AG04449 (cell line): ENCODE measurements at regions of chr1 and their contacts with region 1.

Region 1: DNA sequence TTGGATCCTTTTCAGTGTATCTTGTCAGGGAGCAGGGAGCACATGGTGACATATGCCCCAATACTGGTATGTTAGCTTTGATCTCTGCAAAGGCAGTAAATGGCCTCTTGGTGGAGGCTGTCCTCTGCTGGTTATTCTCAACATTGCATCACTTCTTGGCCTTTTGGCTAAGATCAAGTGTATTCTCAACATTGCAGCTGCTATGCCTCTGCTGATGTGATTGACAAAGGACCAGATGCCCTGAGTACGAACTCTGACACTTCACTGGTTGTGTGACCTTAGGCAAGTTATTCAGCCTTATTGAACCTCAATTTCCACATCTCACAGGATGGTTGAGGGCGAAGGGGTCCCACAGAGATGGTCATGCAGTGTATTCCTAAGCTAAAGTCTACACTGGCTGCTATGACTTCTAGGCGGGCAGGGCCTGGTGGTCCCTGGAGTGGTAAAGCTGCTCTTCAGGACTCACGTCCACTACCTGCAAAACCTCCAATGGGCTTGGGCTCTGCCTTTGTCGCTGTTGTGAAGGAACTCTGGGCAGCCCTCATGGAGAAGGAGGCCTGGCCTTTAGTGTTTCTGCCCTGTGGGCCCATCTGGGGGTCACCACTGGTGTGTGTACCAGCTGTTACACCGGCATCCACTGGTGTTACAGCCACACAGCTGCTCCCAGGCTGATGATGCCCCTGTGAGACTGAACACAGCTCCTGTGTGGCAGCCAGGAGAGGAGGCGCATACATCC is 64.8 kb downstream of the DNTTIP2 start:
- DNase-seq: no peak
- H3K4me3 ChIP-seq: no peak overlapping the region
- CTCF ChIP-seq: peak; percentile 93

Region 2: DNA sequence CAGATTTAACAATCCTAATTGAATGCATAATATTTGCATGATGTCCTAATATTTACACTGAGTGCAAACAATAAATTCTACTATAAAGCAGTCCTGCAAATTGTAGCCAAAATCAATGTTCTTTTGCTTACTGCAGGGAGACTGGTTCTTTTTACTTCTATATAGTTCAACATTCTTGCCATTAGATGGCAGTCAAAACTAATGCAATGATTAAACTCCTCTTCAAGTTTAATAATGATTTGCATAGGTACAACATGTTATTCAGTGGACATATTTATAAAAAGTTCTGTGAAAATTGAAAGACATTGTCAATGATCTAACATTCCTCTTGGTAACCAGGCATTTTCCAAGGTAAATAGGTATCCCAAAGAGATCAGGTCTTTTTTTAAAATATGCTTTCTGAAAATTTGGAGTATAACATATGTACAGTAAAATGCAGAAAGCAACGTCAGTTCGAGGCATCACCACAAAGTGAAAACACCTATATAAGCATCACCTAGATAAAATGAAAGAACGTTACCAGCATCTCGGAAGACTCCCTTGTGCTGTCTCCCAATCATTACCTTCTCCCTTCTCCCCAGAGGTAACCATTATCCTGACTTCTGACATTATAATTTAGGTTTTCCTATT is 376.1 kb before region 1 on chr1:
- CTCF ChIA-PET with region 1: interaction called, 11 read pairs
- POLR2A ChIA-PET with region 1: no interaction called
- DNase-seq: no peak
- H3K4me3 ChIP-seq: no peak overlapping the region
- CTCF ChIP-seq: peak; percentile 32

Region 3: DNA sequence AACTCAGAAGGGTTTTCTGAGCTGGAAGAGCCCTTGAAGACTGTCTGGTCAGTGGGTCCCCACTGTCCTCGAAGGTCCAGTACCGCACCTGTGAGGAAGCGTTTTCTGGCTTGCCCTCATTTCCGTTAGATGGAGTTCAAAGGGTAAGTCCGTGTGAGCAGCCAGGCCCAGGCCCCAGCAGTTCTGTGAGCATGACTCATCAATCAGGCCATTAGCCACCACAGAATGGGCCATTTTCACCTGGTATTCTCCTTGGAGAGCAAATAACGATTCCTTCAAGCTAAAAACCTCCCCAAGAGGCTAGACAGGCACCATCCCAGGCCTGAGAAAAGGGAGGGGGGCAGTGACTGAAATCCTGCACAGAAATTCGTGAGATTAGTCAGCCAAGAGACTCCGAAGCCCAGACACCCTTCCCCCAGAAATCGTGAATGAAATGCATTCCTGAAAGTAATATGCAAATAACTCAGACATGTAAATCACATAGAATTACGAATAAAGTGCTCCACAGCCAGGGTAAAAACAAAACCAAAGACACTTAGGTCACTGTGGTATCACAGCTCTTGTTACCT is 198.6 kb before region 1 on chr1:
- CTCF ChIA-PET with region 1: interaction called, 437 read pairs
- POLR2A ChIA-PET with region 1: no interaction called
- DNase-seq: no peak
- H3K4me3 ChIP-seq: no peak overlapping the region
- CTCF ChIP-seq: no peak

Region 4: DNA sequence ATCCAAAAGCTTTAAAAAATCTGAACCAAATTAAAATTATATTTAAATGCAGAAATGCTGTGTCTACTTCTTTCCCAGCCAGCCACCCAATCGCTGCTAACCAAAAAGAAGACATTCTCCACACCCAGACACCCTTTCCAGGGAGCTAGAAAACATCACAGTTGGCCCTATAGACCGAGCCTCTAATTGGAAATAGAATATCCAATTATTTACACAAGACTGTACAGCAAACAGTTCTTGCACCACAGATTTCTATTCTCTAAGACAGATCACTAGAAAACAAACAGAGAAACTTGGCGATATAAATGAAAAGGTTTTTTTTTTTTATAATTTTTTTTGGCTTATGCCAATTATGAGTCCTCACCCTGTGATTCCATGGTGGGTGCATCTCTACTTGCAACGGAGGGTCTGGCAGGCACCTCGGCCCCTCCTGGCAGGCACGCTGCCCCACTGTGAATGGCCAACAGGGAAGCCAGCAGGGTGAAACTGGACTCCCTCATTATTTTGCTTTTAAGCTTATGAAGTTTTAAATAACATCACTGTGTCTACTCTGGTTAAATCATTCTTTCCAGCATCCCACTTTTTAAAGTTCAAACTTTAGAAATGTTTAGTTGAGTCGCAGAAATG is 161.8 kb before region 1 on chr1:
- CTCF ChIA-PET with region 1: interaction called, 15 read pairs
- POLR2A ChIA-PET with region 1: interaction called, 3 read pairs
- DNase-seq: no peak
- H3K4me3 ChIP-seq: no peak overlapping the region
- CTCF ChIP-seq: no peak

Region 5: GRCh38 chr1:93686497-93687250 is 127.6 kb before region 1 on chr1:
- CTCF ChIA-PET with region 1: interaction called, 40 read pairs
- POLR2A ChIA-PET with region 1: interaction called, 15 read pairs
- DNase-seq: no peak
- H3K4me3 ChIP-seq: no peak overlapping the region
- CTCF ChIP-seq: no peak

Region 6: DNA sequence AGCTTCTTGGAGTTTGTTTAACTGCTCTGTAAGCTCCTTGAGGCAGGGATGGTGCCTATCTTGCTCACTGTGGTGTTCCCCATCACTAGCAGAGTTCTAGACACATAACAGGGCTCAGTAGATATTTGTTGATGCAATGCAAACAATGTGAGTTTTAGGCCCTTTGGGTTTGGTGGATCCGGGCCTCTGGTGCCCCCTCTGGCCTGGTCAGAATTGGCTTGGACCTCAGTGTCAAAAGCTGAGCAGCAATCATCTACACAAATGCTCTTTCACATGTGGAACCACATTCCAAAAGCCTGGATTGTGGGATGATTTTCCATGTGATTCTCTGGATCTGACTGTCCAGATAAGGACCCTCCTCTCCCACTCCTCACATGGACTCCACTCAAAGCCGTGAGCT is 79.2 kb before region 1 on chr1:
- CTCF ChIA-PET with region 1: interaction called, 126 read pairs
- POLR2A ChIA-PET with region 1: interaction called, 10 read pairs
- DNase-seq: no peak
- H3K4me3 ChIP-seq: no peak overlapping the region
- CTCF ChIP-seq: peak; percentile 30

Region 7: DNA sequence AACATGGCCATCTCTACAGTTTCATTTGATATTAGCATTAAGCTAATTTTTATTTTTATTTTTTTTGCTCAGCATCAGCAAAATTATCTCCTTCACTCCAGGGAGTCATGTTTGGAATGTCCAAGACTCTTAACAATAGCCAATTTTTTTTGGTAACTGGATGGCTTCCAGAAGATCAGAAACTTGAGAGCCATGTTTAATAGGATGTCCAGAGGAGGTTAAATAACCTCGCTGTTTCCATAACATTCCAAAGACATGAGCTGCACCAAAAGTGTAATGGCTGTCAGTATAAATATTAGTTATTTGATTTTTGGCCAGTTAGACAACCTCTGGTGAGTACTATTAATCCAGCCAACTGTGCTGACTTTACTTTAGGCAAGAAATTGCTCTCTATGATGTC is 15.9 kb before region 1 on chr1:
- CTCF ChIA-PET with region 1: interaction called, 12 read pairs
- POLR2A ChIA-PET with region 1: interaction called, 3 read pairs
- DNase-seq: no peak
- H3K4me3 ChIP-seq: no peak overlapping the region
- CTCF ChIP-seq: no peak

Region 8: GRCh38 chr1:93909146-93910050 is 95.2 kb after region 1 on chr1 and contains the start of gene GCLM:
- CTCF ChIA-PET with region 1: no interaction called
- POLR2A ChIA-PET with region 1: no interaction called
- DNase-seq: peak; percentile 61
- H3K4me3 ChIP-seq: peak within 1 kb of the TSS; percentile 76
- CTCF ChIP-seq: peak; percentile 97